Activated CD4-positive, alpha-beta memory T cell treated with anti-CD3 and anti-CD28 coated beads, Interleukin-2, amount 10 ng/mL, durations not matched to agents 7 days and 5 days (primary cell): ENCODE measurements at regions of chr9 and their contacts with region 1.

Region 1: DNA sequence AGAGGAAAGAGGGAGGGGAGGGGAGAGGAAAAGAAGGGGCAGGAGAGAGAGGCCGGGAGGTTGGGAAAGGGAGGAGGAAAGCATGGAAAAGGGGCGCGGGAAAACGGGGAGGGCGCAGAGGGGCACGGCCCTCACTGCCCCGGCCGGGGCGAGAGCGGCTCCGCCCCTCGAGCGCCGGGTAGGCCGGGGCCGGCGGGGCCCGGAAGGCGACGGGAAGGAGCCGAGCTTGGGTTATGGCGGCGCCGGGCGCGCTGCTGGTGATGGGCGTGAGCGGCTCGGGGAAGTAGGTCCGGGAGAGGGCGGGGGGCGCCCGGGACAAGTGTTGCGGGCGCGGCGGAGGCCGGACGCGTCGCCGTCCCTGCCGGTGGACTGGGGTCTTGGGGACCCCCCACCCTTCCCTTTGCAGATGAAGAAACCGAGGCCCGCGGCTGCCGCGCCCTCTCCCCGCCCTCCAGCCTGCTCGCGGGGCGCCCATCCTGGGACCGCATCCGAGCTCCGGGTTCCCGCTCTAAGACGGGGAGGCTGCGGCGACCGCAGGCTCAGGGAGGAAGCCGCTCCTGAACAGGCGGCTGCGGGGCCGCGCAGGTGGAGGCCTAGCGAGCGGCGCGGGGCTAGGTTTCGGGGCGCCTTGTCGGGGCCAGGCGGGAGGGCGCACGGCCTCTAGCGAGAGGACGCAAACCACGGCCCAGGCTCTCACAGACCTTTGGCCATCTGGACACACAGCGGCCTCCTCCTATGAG is at the start of gene IDNK:
- DNase-seq: peak; percentile 71
- H3K4me3 Mint-ChIP-seq: peak within 1 kb of the TSS; percentile 85
- H3K27ac Mint-ChIP-seq: peak within 1 kb of the TSS; percentile 92
- H3K4me1 Mint-ChIP-seq: peaks cover 35% of the 10 kb centered on the region
- H3K27me3 Mint-ChIP-seq: peaks cover 2% of the 10 kb centered on the region
- total RNA-seq, gene IDNK: 8.2 to 9.0 TPM

Region 2: GRCh38 chr9:83405759-83406158 is 217.3 kb before region 1 on chr9:
- CTCF ChIA-PET with region 1: no interaction called
- POLR2A ChIA-PET with region 1: no interaction called
- DNase-seq: no peak
- H3K4me3 Mint-ChIP-seq: no peak overlapping the region
- H3K27ac Mint-ChIP-seq: no peak overlapping the region
- H3K4me1 Mint-ChIP-seq: no peaks in the 10 kb centered on the region
- H3K27me3 Mint-ChIP-seq: no peaks in the 10 kb centered on the region

Region 3: GRCh38 chr9:83636813-83637212 is 13.7 kb after region 1 on chr9:
- CTCF ChIA-PET with region 1: interaction called, 11 read pairs
- POLR2A ChIA-PET with region 1: interaction called, 10 read pairs
- DNase-seq: no peak
- H3K4me3 Mint-ChIP-seq: no peak overlapping the region
- H3K27ac Mint-ChIP-seq: no peak overlapping the region
- H3K4me1 Mint-ChIP-seq: no peaks in the 10 kb centered on the region
- H3K27me3 Mint-ChIP-seq: no peaks in the 10 kb centered on the region

Region 4: DNA sequence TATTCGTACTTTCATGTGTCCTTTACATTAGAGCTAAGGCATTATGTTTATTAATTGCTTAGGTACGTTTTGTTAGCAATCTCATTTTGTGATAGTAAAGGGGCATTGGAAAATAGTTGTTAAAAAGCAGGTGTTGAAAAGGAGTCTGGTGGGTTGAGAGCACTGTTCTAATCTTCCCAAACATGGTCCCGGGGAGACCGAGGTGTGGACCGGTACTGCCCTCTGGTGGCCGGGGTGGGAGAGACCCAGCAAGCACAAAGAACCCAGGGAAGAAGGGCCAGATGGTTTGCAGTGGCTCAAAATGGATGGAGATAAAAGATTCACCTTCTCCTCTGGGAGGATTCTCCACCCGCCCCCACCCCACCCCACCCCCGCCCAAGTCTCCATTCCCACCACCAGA is 26.0 kb after region 1 on chr9:
- CTCF ChIA-PET with region 1: interaction called, 60 read pairs
- POLR2A ChIA-PET with region 1: interaction called, 9 read pairs
- DNase-seq: peak; percentile 75
- H3K4me3 Mint-ChIP-seq: no peak overlapping the region
- H3K27ac Mint-ChIP-seq: no peak overlapping the region
- H3K4me1 Mint-ChIP-seq: peaks cover 5% of the 10 kb centered on the region
- H3K27me3 Mint-ChIP-seq: no peaks in the 10 kb centered on the region

Region 5: DNA sequence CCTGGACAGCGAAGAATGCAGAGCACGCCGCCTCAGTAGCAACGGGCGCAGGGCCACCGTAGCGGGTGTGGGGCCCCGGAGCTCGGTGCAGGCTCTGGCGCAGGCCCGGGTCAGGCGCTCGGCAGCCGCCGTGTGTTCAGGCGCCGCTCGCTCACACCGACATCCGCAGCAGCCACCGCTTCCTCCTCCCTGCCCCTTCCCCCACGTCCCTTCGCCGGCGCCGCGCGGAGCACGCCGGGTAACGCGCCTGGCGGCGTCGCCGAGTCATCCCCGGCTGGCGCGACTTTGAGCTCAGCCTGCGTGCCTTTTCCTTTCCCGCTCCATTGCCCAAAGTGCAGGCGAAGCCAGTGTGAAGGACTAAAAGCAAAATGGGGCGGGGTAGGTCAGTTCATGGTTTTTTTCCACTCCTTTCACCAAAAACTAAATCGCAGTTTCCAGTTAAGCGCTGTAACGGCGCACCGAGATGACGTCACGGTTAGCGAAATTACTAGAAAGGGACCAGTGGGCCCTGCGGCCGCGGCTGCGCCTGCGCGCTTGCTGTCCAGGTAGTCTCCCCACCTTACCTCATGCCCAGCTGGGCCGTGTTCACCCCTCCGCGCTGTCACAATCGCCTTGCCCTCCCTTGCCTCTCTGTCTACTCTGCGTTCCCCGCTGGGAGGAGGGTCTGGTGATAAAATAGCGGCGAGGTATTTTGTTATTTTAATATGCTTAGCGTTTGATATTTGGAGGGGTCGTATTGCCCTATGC is 84.8 kb after region 1 on chr9 and contains the start of gene UBQLN1:
- CTCF ChIA-PET with region 1: interaction called, 20 read pairs
- POLR2A ChIA-PET with region 1: interaction called, 79 read pairs
- DNase-seq: peak; percentile 92
- H3K4me3 Mint-ChIP-seq: peak within 1 kb of the TSS; percentile 85
- H3K27ac Mint-ChIP-seq: peak within 1 kb of the TSS; percentile 98
- H3K4me1 Mint-ChIP-seq: peaks cover 36% of the 10 kb centered on the region
- H3K27me3 Mint-ChIP-seq: no peaks in the 10 kb centered on the region
- total RNA-seq, gene UBQLN1: 109 to 112 TPM

Region 6: DNA sequence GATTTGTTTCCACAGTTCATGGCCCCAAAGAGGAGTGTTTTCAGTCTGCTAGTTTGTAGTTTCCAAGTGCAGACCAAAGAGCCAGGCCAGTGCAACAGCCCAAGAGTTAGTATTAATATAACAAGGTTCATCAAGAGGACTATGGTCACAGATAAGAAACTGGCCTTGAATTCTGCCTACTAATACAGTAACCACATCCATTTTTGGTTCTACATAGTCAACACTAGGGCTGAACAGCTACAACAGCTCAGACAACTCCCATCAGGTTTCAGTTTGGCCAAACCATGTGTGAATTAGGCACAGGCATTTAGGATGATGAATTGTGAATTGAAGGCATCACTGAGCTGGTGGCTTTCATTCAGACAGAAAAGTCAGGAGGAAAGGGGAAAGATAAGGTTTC is 98.4 kb after region 1 on chr9:
- CTCF ChIA-PET with region 1: no interaction called
- POLR2A ChIA-PET with region 1: no interaction called
- DNase-seq: no peak
- H3K4me3 Mint-ChIP-seq: no peak overlapping the region
- H3K27ac Mint-ChIP-seq: no peak overlapping the region
- H3K4me1 Mint-ChIP-seq: no peaks in the 10 kb centered on the region
- H3K27me3 Mint-ChIP-seq: no peaks in the 10 kb centered on the region

Region 7: GRCh38 chr9:83920927-83921707 is 298.0 kb after region 1 on chr9 and contains the start of gene KIF27:
- CTCF ChIA-PET with region 1: interaction called, 5 read pairs
- POLR2A ChIA-PET with region 1: interaction called, 24 read pairs
- DNase-seq: peak; percentile 98
- H3K4me3 Mint-ChIP-seq: peak within 1 kb of the TSS; percentile 81
- H3K27ac Mint-ChIP-seq: peak within 1 kb of the TSS; percentile 88
- H3K4me1 Mint-ChIP-seq: peaks cover 18% of the 10 kb centered on the region
- H3K27me3 Mint-ChIP-seq: no peaks in the 10 kb centered on the region
- total RNA-seq, gene KIF27: 2.3 TPM